ENCODE measurements at regions of chr19 and their contacts with region 1.

Region 1: DNA sequence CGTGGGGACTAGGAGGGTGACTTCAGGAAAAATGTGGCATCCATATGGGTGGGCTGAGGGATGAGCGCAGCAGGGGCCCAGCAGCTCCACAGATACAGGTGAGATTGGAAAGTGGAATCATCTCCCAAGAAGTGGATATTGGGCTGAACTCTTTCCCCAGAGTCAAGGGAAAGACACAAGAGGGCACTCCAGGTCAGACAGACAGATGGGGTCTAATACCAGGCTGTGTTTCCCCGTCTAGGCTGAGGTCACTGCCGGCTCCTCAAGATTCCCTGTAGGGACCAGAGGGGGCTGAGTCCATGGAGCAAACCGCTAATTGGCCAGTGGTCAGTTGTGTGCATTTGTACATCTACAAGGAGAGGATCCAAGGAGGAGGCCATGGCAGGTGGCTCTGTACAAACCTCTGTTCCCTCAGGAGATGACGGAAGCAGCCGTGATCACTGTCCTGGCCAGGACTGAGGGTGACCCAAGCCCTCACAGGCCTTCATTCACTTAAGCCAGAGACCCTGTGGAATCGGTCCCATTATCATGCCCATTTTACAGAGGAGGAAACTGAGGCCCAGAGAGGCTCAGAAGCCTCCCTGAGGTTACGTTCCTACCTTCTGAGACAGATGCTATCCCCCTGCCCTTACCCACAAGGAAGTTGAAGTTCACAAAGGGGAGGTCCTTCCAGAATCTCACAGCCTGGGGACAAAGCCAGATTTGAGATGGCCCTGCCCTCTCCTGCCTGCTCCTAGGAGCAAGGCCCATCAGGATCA is 14.9 kb upstream of the IGLON5 start:
- DNase-seq: peak; percentile 42
- ATAC-seq: peak; percentile 61
- H3K4me3 Mint-ChIP-seq: no peak overlapping the region
- H3K27ac Mint-ChIP-seq: no peak overlapping the region
- H3K4me1 Mint-ChIP-seq: peaks cover 57% of the 10 kb centered on the region
- H3K27me3 Mint-ChIP-seq: peaks cover 5% of the 10 kb centered on the region; the same call in 1 of the 2 replicates
- CTCF ChIP-seq: no peak

Region 2: GRCh38 chr19:51158474-51159129 is 137.9 kb before region 1 on chr19:
- CTCF ChIA-PET with region 1: interaction called, 12 read pairs
- POLR2A ChIA-PET with region 1: no interaction called
- DNase-seq: peak; percentile 93
- ATAC-seq: peak; percentile 92
- H3K4me3 Mint-ChIP-seq: no peak overlapping the region
- H3K27ac Mint-ChIP-seq: no peak overlapping the region; the same call in 1 of the 2 replicates
- H3K4me1 Mint-ChIP-seq: peaks cover 11% of the 10 kb centered on the region
- H3K27me3 Mint-ChIP-seq: peaks cover 6% of the 10 kb centered on the region
- CTCF ChIP-seq: peak; percentile 96

Region 3: GRCh38 chr19:51181913-51182419 is 114.5 kb before region 1 on chr19:
- CTCF ChIA-PET with region 1: no interaction called
- POLR2A ChIA-PET with region 1: no interaction called
- DNase-seq: peak; percentile 77
- ATAC-seq: peak; percentile 82
- H3K4me3 Mint-ChIP-seq: peak overlapping the region; percentile 68
- H3K27ac Mint-ChIP-seq: no peak overlapping the region
- H3K4me1 Mint-ChIP-seq: 0 out of 2 replicates have a peak, but pooled peaks cover 4% of the 10 kb centered on the region
- H3K27me3 Mint-ChIP-seq: peaks cover 55% of the 10 kb centered on the region
- CTCF ChIP-seq: no peak

Region 4: DNA sequence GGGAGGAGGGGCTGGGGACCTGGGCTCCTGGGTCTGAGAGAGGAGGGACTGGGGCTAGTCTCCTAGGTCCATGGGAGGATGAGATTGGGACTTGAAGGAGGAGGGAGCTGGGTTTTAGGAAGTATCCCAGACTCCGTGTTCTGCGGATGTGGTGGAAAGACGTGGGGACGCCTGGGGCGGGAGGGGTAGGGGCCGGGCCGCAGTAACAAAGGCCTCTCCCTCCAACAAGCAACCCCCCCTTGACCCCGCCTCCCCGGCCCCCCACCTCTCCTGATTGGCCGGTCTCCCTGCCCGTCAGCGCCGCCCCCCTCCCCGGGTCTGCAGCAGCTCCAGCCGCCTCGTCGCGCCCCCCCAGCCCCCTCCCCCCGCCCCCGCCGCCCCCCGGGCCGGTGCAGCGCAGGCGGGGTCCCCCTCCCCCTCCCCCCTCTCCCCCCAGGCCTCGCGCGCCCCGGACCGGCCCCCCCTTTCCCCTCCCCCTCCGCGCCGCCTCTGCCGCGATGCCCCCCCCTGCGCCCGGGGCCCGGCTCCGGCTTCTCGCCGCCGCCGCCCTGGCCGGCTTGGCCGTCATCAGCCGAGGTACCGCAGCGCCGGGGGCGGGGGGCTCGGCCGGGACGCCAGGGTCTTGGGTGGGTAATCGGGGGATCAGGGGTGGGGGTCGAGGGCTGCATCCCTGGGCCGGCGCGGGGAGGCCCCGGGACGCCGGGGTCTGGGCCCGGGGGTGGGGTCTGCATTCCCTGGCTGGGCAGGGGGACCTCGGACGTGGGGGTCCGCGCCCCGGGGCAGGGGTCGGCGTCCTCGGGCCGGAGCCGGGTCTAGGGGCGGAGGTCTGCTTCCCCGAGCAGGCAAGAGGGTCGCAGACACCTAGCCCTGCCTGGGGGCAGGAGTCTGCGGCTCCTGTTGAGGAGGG is 15.1 kb after region 1 on chr19 and contains the start of gene IGLON5:
- CTCF ChIA-PET with region 1: interaction called, 12 read pairs
- POLR2A ChIA-PET with region 1: no interaction called
- DNase-seq: peak; percentile 72
- ATAC-seq: peak; percentile 85
- H3K4me3 Mint-ChIP-seq: peak within 1 kb of the TSS; percentile 83
- H3K27ac Mint-ChIP-seq: no peak within 1 kb of the TSS
- H3K4me1 Mint-ChIP-seq: peaks cover 23% of the 10 kb centered on the region
- H3K27me3 Mint-ChIP-seq: peaks cover 21% of the 10 kb centered on the region
- CTCF ChIP-seq: no peak
- total RNA-seq, gene IGLON5: 41.2 to 64.1 TPM (median 60.2 TPM) in 3 replicates

Region 5: GRCh38 chr19:51407511-51408131 is 111.1 kb after region 1 on chr19:
- CTCF ChIA-PET with region 1: interaction called, 15 read pairs
- POLR2A ChIA-PET with region 1: no interaction called
- DNase-seq: peak; percentile 47
- ATAC-seq: peak; percentile 87
- H3K4me3 Mint-ChIP-seq: no peak overlapping the region
- H3K27ac Mint-ChIP-seq: peak overlapping the region; percentile 85
- H3K4me1 Mint-ChIP-seq: peaks cover 32% of the 10 kb centered on the region
- H3K27me3 Mint-ChIP-seq: peaks cover 8% of the 10 kb centered on the region
- CTCF ChIP-seq: 0 out of 2 replicates have a peak, but pooled peaks have one; percentile 27

Region 6: DNA sequence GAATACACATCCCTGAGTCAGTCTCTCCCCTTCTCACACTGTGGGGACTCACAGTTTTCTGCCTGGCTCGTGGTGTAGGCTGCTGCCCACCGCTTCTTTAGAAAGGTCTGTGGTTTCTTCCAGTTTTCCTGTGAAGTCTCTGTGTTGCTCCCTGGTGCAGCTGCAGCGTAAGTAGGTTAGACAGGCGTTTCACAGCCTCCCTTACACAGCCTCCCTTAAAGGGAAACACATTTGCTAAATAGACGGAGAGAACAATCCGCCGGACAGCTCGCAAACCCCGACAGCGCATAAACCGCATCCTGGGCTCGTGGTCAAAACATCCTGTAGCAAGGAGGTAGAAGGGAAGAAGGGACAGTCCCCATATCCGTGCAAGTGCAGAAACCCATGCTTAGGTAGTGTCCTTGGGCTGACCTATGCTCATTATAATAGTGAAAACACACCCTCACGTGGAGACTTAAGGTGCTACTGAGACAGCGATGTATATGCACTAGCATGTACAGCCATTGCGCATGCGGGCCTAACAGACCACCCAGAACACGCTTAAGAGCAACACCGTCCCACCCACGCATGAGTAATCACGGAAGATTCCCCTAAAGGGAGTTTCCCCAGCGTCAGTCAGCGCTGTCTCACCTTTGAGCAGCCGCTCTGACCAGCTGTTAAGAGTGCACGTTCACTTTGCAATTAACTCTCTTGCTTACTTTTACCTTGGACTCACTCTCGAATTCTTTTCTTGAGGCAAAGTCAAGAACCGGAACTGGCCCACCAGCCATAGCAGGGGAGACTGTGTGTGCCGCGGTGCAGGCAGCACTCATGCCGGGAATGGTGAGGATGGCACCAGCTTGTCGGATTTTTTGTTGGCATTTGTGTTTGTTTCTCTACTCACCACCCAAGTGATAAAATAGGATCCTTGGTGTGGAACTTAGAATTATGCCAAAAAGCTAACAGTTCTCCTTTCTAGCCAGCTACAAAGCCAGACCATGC is 145.2 kb after region 1 on chr19:
- CTCF ChIA-PET with region 1: interaction called, 14 read pairs
- POLR2A ChIA-PET with region 1: no interaction called
- DNase-seq: no peak
- ATAC-seq: no peak
- H3K4me3 Mint-ChIP-seq: no peak overlapping the region
- H3K27ac Mint-ChIP-seq: no peak overlapping the region
- H3K4me1 Mint-ChIP-seq: peaks cover 6% of the 10 kb centered on the region; the same call in 1 of the 2 replicates
- H3K27me3 Mint-ChIP-seq: peaks cover 39% of the 10 kb centered on the region
- CTCF ChIP-seq: no peak